GM12878 (cell line): ENCODE measurements at regions of chr9 and their contacts with region 1.

Region 1: GRCh38 chr9:114505187-114506081 is at the start of gene WHRN:
- DNase-seq: no peak
- ATAC-seq: peak; percentile 85
- H3K4me3 ChIP-seq: peak within 1 kb of the TSS; percentile 64; the same call in 1 of the 2 replicates
- H3K27ac ChIP-seq: no peak within 1 kb of the TSS
- H3K4me1 ChIP-seq: 0 out of 2 replicates have a peak, but pooled peaks cover 3% of the 10 kb centered on the region
- H3K27me3 ChIP-seq: peaks cover 2 to 9% of the 10 kb centered on the region in 2 experiments
- CTCF ChIP-seq: no peak
- EP300 ChIP-seq: no peak
- POLR2A ChIP-seq: peak; percentile 59; the same call in 1 of the 2 replicates
- RAD21 ChIP-seq: no peak
- polyA plus RNA-seq, gene WHRN: 0.04 TPM in 1 of 2 experiments, not detected in the other

Region 2: GRCh38 chr9:114348906-114349482 is 156.4 kb before region 1 on chr9:
- CTCF ChIA-PET with region 1: no interaction called
- POLR2A ChIA-PET with region 1: no interaction called
- RAD21 ChIA-PET with region 1: interaction called, 3 read pairs
- SMC1A ChIA-PET with region 1: no interaction called
- in situ Hi-C with region 1: no loop called
- intact Hi-C with region 1: loop called (anchors 10 kb)
- DNase-seq: peak; percentile 94
- ATAC-seq: peak; percentile 96
- H3K4me3 ChIP-seq: no peak overlapping the region
- H3K27ac ChIP-seq: peak overlapping the region; percentile 29
- H3K4me1 ChIP-seq: peaks cover 25% of the 10 kb centered on the region
- H3K27me3 ChIP-seq: no peaks in the 10 kb centered on the region
- CTCF ChIP-seq: no peak
- EP300 ChIP-seq: peak; percentile 65 to 75
- POLR2A ChIP-seq: peak; percentile 59; the same call in 1 of the 2 replicates
- RAD21 ChIP-seq: no peak

Region 3: DNA sequence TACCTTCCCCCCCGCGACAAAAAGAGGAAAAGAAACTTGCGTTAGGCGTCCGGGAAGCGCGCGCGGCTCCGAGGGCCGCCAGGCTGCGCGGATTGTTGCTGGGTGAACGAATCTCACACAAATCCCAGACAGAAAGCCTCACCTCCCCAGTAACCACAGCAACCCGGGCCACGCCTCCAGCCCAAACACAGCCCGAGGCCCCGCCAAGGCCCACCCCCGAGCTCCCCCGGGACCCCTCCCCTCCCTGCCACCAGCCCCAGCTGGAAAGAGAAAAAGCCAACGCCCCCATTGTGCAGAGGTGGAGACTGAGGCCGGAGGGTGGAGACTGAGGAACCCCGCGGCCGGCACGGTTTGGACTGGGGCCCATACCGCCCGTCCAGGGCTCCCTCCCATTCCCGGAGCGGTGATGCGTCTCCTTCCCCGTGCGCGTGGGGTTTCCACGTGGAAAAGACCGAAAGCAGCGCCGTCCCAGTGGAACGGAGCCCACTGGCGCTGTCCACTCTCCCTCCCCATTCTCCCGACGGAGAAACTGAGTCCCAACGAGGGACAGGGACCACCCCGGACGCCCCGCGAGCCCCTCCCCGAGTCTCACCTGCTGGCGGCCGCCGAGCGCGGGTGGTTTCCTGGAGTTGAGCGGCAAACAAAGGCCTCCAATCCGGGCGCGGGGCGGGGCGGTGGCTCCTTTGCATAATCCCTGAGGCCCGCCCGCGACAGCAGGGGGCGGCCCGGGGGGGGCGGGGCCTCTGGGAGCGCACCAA is 107.4 kb before region 1 on chr9:
- CTCF ChIA-PET with region 1: interaction called, 109 read pairs
- POLR2A ChIA-PET with region 1: interaction called, 17 read pairs
- RAD21 ChIA-PET with region 1: interaction called, 5 read pairs
- SMC1A ChIA-PET with region 1: interaction called, 4 read pairs
- in situ Hi-C with region 1: no loop called
- intact Hi-C with region 1: no loop called
- DNase-seq: peak; percentile 80
- ATAC-seq: peak; percentile 89
- H3K4me3 ChIP-seq: peak overlapping the region; percentile 95
- H3K27ac ChIP-seq: peak overlapping the region; percentile 87
- H3K4me1 ChIP-seq: peaks cover 21% of the 10 kb centered on the region
- H3K27me3 ChIP-seq: no peaks in the 10 kb centered on the region
- CTCF ChIP-seq: 0 out of 6 replicates have a peak, but pooled peaks of 1 of the 3 experiments have one; percentile 1
- EP300 ChIP-seq: peak; percentile 51 to 62; a peak in 2 of 4 replicates
- POLR2A ChIP-seq: peak; percentile 81
- RAD21 ChIP-seq: 0 out of 2 replicates have a peak, but pooled peaks have one; percentile 12

Region 4: DNA sequence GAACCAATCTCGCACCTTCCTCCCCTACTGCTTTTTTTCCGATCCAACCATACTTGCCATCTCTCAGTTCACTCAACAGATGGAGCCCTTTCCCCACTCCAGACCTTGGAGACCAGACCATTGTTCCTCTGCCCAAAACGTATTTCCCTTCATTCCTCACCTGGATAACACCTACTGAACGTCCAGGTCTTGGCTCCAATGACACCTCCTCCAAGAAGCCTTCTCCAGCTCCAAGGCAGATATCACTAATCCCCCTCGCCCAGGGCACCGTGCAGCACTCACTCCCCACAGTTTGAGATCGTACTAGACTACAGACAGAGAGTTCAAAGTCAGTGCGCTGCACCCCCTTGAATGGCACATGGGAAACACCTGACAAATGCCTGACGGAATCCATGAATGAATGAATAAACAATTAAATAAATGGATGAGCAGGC is 70.5 kb before region 1 on chr9:
- CTCF ChIA-PET with region 1: interaction called, 98 read pairs
- POLR2A ChIA-PET with region 1: no interaction called
- RAD21 ChIA-PET with region 1: interaction called, 33 read pairs
- SMC1A ChIA-PET with region 1: interaction called, 139 read pairs
- in situ Hi-C with region 1: no loop called
- intact Hi-C with region 1: loop called (anchors 1 kb)
- DNase-seq: no peak
- ATAC-seq: peak; percentile 77
- H3K4me3 ChIP-seq: no peak overlapping the region
- H3K27ac ChIP-seq: no peak overlapping the region
- H3K4me1 ChIP-seq: no peaks in the 10 kb centered on the region
- H3K27me3 ChIP-seq: peaks cover 0 to 4% of the 10 kb centered on the region in 2 experiments; a peak in 1 of 4 replicates
- CTCF ChIP-seq: peak; percentile 58 to 75 (median 71)
- EP300 ChIP-seq: no peak
- POLR2A ChIP-seq: no peak
- RAD21 ChIP-seq: peak; percentile 91

Region 5: GRCh38 chr9:114487607-114488300 is 17.7 kb before region 1 on chr9:
- CTCF ChIA-PET with region 1: interaction called, 256 read pairs
- POLR2A ChIA-PET with region 1: interaction called, 85 read pairs
- RAD21 ChIA-PET with region 1: interaction called, 104 read pairs
- SMC1A ChIA-PET with region 1: interaction called, 177 read pairs
- in situ Hi-C with region 1: no loop called
- intact Hi-C with region 1: loop called (anchors 2 kb)
- DNase-seq: peak; percentile 34
- ATAC-seq: peak; percentile 80
- H3K4me3 ChIP-seq: no peak overlapping the region
- H3K27ac ChIP-seq: no peak overlapping the region
- H3K4me1 ChIP-seq: peaks cover 15% of the 10 kb centered on the region
- H3K27me3 ChIP-seq: no peaks in the 10 kb centered on the region
- CTCF ChIP-seq: peak; percentile 90 to 93 (median 93); a peak in 5 of 6 replicates
- EP300 ChIP-seq: no peak
- POLR2A ChIP-seq: no peak
- RAD21 ChIP-seq: peak; percentile 85

Region 6: DNA sequence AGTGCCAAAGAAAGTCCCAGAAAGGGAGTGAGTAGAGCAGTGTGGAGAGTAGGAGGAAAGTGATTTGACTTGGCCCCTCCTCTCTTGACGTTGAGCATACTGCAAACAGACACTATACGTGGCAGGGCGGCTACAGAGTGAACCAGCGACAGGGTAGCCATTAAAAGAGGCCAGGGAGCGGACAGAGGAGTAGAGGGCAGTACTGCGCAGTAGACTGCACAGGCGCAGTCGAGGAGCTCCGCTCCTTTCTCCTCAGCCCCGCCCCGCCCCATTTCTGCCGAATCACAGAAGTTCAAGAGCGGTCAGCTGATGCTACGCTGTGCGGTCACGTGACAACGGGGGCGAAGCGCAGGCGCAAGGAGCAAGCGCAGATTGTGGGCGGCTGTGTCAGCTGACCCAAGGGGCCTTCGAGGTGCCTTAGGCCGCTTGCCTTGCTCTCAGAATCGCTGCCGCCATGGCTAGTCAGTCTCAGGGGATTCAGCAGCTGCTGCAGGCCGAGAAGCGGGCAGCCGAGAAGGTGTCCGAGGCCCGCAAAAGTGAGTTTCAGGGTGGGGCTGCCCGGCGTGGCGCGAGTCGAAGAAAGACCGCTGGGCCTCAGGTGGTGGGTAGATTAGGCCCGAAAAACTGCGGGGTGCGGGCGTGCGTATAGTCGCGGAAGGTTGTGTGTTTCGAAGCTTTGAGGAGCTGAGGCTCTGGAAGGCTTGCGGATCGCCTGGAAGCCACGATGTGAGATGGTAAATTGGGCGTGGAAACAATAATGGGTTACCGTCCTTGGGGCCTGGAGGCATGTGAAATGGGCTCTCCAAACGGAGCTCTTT is 82.2 kb after region 1 on chr9 and contains the start of gene ATP6V1G1:
- CTCF ChIA-PET with region 1: interaction called, 9 read pairs
- POLR2A ChIA-PET with region 1: interaction called, 7 read pairs
- RAD21 ChIA-PET with region 1: interaction called, 22 read pairs
- SMC1A ChIA-PET with region 1: interaction called, 17 read pairs
- in situ Hi-C with region 1: no loop called
- intact Hi-C with region 1: no loop called
- DNase-seq: peak; percentile 96
- ATAC-seq: peak; percentile 95
- H3K4me3 ChIP-seq: peak within 1 kb of the TSS; percentile 98
- H3K27ac ChIP-seq: peak within 1 kb of the TSS; percentile 78
- H3K4me1 ChIP-seq: no peaks in the 10 kb centered on the region; the same call in 1 of the 2 replicates
- H3K27me3 ChIP-seq: no peaks in the 10 kb centered on the region
- CTCF ChIP-seq: peak in 1 of 3 experiments; percentile 17; a peak in 1 of 6 replicates
- EP300 ChIP-seq: peak; percentile 9 to 49; a peak in 1 of 4 replicates
- POLR2A ChIP-seq: peak; percentile 98
- RAD21 ChIP-seq: no peak
- polyA plus RNA-seq, gene ATP6V1G1: 162 to 204 TPM